Activated naive CD4-positive, alpha-beta T cell treated with anti-CD3 and anti-CD28 coated beads for 36 hours (primary cell): ENCODE measurements at regions of chr6 and their contacts with region 1.

Region 1: DNA sequence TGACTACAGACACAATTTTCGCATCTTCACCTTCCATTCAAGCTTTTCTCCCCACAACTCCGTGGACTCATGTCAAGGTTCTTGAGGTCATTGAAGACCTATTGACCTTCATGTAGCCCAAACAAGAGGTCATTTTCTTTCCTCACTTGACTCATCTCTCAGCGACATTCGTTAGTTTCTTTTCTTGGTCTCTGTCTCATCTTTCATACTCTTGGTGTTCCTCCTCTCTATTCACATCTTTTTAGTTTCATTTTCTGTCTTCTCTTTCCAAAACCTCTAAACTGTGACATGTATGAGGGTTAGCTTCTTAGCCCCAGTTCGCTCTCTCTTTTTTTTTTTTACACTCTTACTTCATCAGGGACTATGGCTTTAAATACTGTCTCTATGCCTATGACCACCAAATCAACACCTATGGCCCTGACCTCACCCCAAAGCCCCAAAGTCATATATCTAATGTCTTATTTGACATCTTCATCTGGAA is 128.6 kb upstream of the BACH2 start:
- DNase-seq: peak; percentile 46
- H3K4me3 Mint-ChIP-seq: peak overlapping the region; percentile 48
- H3K27ac Mint-ChIP-seq: peak overlapping the region; percentile 92
- H3K4me1 Mint-ChIP-seq: peaks cover 41% of the 10 kb centered on the region
- H3K27me3 Mint-ChIP-seq: no peaks in the 10 kb centered on the region

Region 2: GRCh38 chr6:89829591-89830385 is 595.4 kb before region 1 on chr6 and contains the start of gene CASP8AP2:
- CTCF ChIA-PET with region 1: no interaction called
- intact Hi-C with region 1: no loop called
- DNase-seq: peak; percentile 98
- H3K4me3 Mint-ChIP-seq: peak within 1 kb of the TSS; percentile 99
- H3K27ac Mint-ChIP-seq: peak within 1 kb of the TSS; percentile 96
- H3K4me1 Mint-ChIP-seq: peaks cover 33% of the 10 kb centered on the region
- H3K27me3 Mint-ChIP-seq: no peaks in the 10 kb centered on the region
- total RNA-seq, gene CASP8AP2: 27.4 to 30.2 TPM

Region 3: DNA sequence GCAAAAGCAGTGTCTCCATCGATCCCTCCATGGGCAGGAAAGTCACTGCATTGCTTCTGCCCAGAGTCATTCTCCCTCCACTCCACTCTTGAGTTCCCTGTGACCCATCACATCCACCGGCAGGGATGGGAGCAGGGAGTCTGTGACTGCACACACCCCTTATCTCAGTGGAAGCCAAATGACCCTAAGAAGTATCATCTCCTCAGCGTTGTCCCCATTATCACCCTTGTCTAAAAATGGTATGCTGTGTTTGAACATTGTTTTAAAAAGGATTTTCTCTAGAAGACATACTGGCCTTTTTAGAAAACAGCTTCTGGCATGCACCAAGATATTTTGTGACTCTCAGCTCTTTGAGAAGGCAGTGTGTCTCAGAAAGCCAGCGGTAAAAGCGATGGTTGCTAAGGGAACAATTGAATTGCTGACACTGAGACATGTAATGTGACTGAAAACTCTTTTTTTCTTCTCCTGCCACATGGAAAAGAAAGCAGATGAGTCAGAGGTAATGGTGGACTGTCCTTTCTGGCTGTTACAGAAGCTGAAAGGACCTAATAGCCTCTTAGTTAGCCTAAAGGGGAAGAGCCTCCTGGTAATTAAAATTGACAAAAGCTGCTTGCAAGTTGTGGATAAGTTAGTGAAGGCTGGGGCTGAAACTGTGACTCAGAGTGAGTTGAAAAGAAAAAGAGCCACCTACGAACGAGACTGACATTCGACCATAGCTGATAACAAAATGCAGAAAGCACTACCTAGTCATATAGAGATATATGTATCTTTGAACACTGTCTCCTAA is 41.1 kb after region 1 on chr6:
- CTCF ChIA-PET with region 1: interaction called, 8 read pairs
- intact Hi-C with region 1: loop called (anchors 1 kb)
- DNase-seq: peak; percentile 73
- H3K4me3 Mint-ChIP-seq: no peak overlapping the region
- H3K27ac Mint-ChIP-seq: peak overlapping the region; percentile 90
- H3K4me1 Mint-ChIP-seq: peaks cover 82% of the 10 kb centered on the region
- H3K27me3 Mint-ChIP-seq: no peaks in the 10 kb centered on the region